ENCODE measurements at regions of chr6 and their contacts with region 1.

Region 1: DNA sequence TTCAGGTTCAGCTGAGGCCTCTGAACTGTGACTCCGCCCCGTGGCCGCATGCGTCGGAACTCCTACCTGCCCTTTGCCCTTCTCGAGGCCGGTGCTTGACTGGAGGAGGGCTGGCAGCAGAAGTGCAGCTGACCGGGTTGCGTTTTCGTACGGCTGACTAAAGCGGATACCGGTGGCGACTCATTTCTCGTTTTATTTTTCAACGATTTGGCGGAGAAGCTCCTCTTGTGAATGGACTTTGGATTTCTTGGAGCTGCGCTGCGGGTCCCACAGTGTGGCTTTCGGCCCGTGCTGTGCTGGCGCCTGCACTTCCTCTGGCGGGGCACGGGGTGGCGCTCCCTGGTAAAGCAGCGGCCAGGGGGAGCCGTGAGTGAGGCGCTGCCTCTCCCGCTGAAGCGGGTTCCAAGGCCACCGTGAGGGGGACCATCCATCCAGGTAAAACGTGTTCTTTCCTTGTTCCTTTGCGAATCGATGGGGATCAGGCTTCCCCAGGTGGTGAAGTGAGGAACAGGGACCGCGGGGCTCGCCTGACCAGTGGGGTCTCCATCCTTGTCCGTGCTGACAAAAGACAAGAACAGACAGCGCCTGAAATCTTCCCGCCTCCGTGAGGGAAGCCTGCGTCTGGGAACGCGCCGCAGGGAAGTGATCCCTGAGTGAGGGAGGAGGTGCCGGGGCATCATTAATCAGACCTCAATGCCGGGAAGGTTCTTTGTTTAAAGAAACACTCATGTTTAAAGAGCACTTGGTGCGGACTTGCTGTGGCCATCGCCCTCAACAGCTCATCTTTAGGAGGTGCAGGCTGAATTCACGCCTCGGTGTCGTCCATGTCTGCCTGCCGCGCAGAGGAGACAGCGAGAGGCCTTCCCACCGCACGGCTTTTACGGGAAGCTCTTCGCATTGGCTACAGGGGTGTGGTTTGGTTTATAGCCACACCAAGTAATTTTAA is 38.8 kb downstream of the ERMARD start:
- DNase-seq: peak; percentile 89
- CTCF ChIP-seq: peak; percentile 99

Region 2: GRCh38 chr6:169774347-169774746 is 15.9 kb before region 1 on chr6:
- CTCF ChIA-PET with region 1: interaction called, 18 read pairs
- POLR2A ChIA-PET with region 1: no interaction called
- DNase-seq: no peak
- CTCF ChIP-seq: no peak

Region 3: GRCh38 chr6:169806701-169807100 is 16.4 kb after region 1 on chr6:
- CTCF ChIA-PET with region 1: interaction called, 87 read pairs
- POLR2A ChIA-PET with region 1: interaction called, 3 read pairs
- DNase-seq: no peak
- CTCF ChIP-seq: no peak

Region 4: DNA sequence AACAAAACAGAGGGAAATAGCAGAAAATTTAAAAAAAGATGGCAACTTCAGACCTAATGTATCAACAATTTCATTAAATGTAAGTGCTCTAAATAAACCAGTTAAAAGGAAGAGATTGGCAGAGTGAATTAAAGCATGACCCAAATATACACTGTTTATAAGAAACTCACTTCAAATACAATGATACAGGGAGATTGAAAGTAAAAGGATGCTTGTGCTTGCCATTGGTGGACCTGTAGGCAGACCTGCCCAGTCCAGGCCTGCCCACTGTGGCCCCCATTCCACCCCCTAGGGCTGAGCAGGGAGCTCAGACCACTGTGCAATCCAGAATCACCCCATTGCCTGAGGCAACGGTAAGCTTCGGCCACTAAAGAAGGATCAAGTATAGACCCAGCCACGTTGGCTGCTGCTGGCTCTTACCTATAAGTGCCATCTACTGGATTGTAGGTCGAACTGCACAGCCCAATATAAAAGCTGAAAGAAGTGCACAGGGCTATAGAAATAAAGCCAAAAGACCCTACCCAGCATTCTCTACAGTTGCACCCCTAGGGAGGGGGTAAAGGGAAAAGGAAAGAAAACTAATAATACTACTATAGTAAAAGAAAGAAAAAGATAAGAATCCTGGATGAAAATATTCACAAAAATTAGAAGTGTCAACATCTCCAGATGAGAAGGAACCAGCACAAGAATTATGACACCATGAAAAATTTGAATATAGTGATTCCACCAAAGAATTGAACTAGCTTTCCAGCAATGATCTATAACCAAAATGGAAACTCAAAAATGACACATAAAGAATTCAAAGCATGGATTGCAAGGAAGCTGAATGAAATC is 726.7 kb after region 1 on chr6:
- CTCF ChIA-PET with region 1: interaction called, 31 read pairs
- POLR2A ChIA-PET with region 1: no interaction called
- DNase-seq: peak; percentile 39
- CTCF ChIP-seq: peak; percentile 74

Region 5: GRCh38 chr6:170529839-170530469 is 739.7 kb after region 1 on chr6:
- CTCF ChIA-PET with region 1: interaction called, 77 read pairs
- POLR2A ChIA-PET with region 1: no interaction called
- DNase-seq: peak; percentile 70
- CTCF ChIP-seq: peak; percentile 84

Measured in GM10248 (cell line).